Transverse colon (tissue), 4 donors: ENCODE measurements at regions of chr10 and their contacts with region 1.

Region 1: GRCh38 chr10:27440478-27440877 is 63.6 kb upstream of the RAB18 start:
- DNase-seq: no peak
- H3K4me3 ChIP-seq: no peak overlapping the region
- H3K27ac ChIP-seq: no peak overlapping the region
- H3K4me1 ChIP-seq: no peaks in the 10 kb centered on the region
- H3K27me3 ChIP-seq: no peaks in the 10 kb centered on the region
- CTCF ChIP-seq: no peak
- EP300 ChIP-seq: no peak
- POLR2A ChIP-seq: no peak

Region 2: DNA sequence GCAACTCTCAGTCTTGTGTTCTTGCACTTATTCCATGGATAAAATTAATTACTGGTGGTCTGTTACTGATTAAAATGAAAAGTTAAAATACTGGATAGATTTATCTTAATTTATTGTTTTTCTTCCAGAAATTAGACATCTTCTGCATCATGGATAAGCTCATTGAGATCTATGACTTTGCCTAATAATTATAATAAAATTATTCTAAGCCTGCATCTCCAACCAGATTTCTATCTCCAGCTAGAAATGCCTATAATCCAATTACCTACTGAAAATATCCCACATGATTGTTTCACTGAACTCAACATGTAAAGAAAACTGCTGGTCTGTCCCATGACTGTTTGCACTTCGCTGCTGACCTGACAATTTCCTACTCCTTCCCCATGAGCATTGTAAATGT is 111.5 kb before region 1 on chr10:
- in situ Hi-C with region 1: no loop called
- intact Hi-C with region 1: no loop called
- DNase-seq: no peak
- H3K4me3 ChIP-seq: no peak overlapping the region
- H3K27ac ChIP-seq: no peak overlapping the region
- H3K4me1 ChIP-seq: no peaks in the 10 kb centered on the region
- H3K27me3 ChIP-seq: no peaks in the 10 kb centered on the region
- CTCF ChIP-seq: no peak
- EP300 ChIP-seq: no peak
- POLR2A ChIP-seq: no peak

Region 3: GRCh38 chr10:27470890-27471289 is 30.4 kb after region 1 on chr10:
- in situ Hi-C with region 1: no loop called
- intact Hi-C with region 1: no loop called
- DNase-seq: no peak
- H3K4me3 ChIP-seq: no peak overlapping the region
- H3K27ac ChIP-seq: no peak overlapping the region
- H3K4me1 ChIP-seq: no peaks in the 10 kb centered on the region
- H3K27me3 ChIP-seq: no peaks in the 10 kb centered on the region
- CTCF ChIP-seq: no peak
- EP300 ChIP-seq: no peak
- POLR2A ChIP-seq: no peak

Region 4: DNA sequence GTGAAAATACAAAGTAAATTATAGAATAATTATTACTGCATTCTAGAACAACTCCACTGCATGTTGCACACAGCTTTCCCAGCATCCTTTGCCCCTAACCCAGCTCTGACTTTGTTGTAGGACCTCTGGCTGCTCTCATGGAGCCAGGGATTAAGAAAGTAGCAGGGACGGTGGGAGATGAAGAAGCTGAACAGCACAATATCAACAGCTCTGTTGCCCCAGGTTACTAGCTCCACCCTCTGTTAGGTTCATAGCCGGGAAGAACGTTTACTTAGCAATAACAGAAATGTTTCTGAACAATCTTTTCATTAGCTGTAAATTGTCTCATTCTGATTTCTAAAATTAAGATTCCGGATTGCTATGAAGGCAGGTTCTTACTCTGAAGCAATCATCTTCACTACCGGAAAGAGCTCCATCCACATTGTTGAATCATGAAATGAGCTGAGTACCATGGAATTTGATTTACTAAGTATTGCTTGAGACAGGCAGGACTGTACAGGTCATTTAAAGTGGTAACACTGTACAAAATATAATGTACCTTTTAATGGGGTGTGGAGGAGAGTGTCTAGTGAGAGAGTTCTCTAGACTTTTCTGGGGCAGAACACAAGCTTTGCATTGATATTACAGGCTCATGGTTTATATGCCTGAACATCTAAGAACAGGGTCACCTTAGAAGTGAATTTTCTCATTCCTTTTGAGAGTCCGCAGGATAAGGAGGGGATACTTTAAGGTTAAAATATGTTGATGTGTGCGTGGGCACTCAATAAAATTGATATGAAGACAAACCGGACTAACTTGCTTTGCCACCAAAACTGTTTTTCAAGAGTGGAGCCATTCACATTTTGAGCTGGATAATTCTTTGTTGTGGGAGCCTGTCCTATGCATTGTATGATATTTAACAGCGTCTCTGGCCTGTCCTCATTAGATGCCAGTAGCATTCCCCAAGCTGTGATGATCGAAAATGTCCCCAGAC is 42.8 kb after region 1 on chr10:
- in situ Hi-C with region 1: no loop called
- intact Hi-C with region 1: no loop called
- DNase-seq: no peak
- H3K4me3 ChIP-seq: no peak overlapping the region
- H3K27ac ChIP-seq: peak overlapping the region in 1 of 4 donors; percentile 2
- H3K4me1 ChIP-seq: peaks cover 0 to 4% (median 0%) of the 10 kb centered on the region in 4 donors
- H3K27me3 ChIP-seq: no peaks in the 10 kb centered on the region
- CTCF ChIP-seq: no peak
- EP300 ChIP-seq: no peak
- POLR2A ChIP-seq: no peak

Region 5: GRCh38 chr10:27637362-27637964 is 197.0 kb after region 1 on chr10:
- in situ Hi-C with region 1: no loop called
- intact Hi-C with region 1: no loop called
- DNase-seq: no peak
- H3K4me3 ChIP-seq: no peak overlapping the region
- H3K27ac ChIP-seq: no peak overlapping the region
- H3K4me1 ChIP-seq: peaks cover 0 to 10% (median 1%) of the 10 kb centered on the region in 4 donors
- H3K27me3 ChIP-seq: no peaks in the 10 kb centered on the region
- CTCF ChIP-seq: no peak
- EP300 ChIP-seq: no peak
- POLR2A ChIP-seq: no peak

Region 6: GRCh38 chr10:27794157-27794556 is 353.7 kb after region 1 on chr10:
- in situ Hi-C with region 1: no loop called
- intact Hi-C with region 1: loop called (anchors 5 kb)
- DNase-seq: no peak
- H3K4me3 ChIP-seq: no peak overlapping the region
- H3K27ac ChIP-seq: no peak overlapping the region
- H3K4me1 ChIP-seq: no peaks in the 10 kb centered on the region
- H3K27me3 ChIP-seq: no peaks in the 10 kb centered on the region
- CTCF ChIP-seq: peak in 3 of 5 experiments; percentile 8 to 20 (median 9)
- EP300 ChIP-seq: no peak
- POLR2A ChIP-seq: no peak